ENCODE measurements at regions of chr1 and their contacts with region 1.

Region 1: GRCh38 chr1:184691719-184692324 is 62.8 kb downstream of the EDEM3 start:
- DNase-seq: no peak
- ATAC-seq: peak; percentile 52
- H3K4me3 ChIP-seq: no peak overlapping the region
- H3K27ac ChIP-seq: no peak overlapping the region
- H3K4me1 ChIP-seq: no peaks in the 10 kb centered on the region
- H3K27me3 ChIP-seq: no peaks in the 10 kb centered on the region

Region 2: GRCh38 chr1:184075055-184076029 is 616.5 kb before region 1 on chr1:
- intact Hi-C with region 1: loop called in 1 of 4 experiments (anchors 10 kb)
- DNase-seq: no peak
- ATAC-seq: peak; percentile 81 to 84
- H3K4me3 ChIP-seq: no peak overlapping the region
- H3K27ac ChIP-seq: no peak overlapping the region
- H3K4me1 ChIP-seq: no peaks in the 10 kb centered on the region
- H3K27me3 ChIP-seq: no peaks in the 10 kb centered on the region

Region 3: DNA sequence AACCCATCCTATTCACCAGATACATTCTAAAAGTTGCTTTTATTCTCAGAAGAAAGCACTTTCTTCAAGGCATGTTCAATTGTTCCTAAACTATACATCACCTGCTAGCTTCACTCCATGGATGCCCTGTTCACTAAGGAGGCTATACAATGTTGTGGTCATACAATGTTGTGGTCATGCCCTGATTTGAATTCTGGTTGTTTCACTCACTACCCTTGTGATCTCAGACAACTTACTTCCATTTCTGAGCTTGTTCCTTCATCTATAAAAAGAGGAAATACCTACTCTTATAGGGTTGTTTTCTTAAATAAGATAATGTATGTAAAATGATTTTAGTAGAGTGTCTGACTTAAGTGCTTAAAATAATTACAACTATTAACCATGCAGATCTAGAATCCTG is 43.2 kb after region 1 on chr1:
- intact Hi-C with region 1: no loop called
- DNase-seq: no peak
- ATAC-seq: no peak
- H3K4me3 ChIP-seq: no peak overlapping the region
- H3K27ac ChIP-seq: no peak overlapping the region
- H3K4me1 ChIP-seq: no peaks in the 10 kb centered on the region
- H3K27me3 ChIP-seq: no peaks in the 10 kb centered on the region

Measured in right cardiac atrium (tissue), 5 donors.